ENCODE measurements at regions of chr7 and their contacts with region 1.

Region 1: DNA sequence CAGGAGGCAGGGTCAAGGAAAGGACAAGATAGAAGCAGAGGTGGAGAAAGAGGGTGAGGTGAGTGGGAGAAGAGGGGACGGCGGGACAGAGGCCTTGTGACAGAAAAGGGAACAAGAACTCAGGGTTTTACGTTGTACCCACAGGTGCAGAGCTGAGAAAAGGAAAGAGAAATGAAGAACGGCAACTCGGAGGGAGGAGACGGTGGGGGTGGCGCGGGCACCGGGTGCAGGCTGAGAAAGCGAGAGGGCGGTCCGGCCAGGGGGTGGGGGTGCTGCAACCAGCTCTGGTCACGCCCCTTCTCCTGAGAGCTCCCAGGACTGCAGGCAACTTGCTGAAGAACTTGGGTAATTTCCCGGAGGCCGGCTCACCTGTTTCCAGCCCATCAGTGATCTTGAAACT is 65.3 kb downstream of the CARD11 start:
- DNase-seq: peak; percentile 99
- H3K4me3 Mint-ChIP-seq: peak overlapping the region; percentile 76
- H3K27ac Mint-ChIP-seq: peak overlapping the region; percentile 98
- H3K4me1 Mint-ChIP-seq: peaks cover 70% of the 10 kb centered on the region
- H3K27me3 Mint-ChIP-seq: no peaks in the 10 kb centered on the region

Region 2: GRCh38 chr7:2870471-2870931 is 107.9 kb before region 1 on chr7:
- CTCF ChIA-PET with region 1: no interaction called
- intact Hi-C with region 1: loop called (anchors 1 kb)
- DNase-seq: peak; percentile 94
- H3K4me3 Mint-ChIP-seq: peak overlapping the region; percentile 61
- H3K27ac Mint-ChIP-seq: peak overlapping the region; percentile 72
- H3K4me1 Mint-ChIP-seq: peaks cover 57% of the 10 kb centered on the region
- H3K27me3 Mint-ChIP-seq: no peaks in the 10 kb centered on the region

Region 3: GRCh38 chr7:2934211-2934731 is 44.1 kb before region 1 on chr7:
- CTCF ChIA-PET with region 1: no interaction called
- intact Hi-C with region 1: loop called (anchors 1 kb)
- DNase-seq: peak; percentile 72
- H3K4me3 Mint-ChIP-seq: no peak overlapping the region
- H3K27ac Mint-ChIP-seq: peak overlapping the region; percentile 99
- H3K4me1 Mint-ChIP-seq: peaks cover 19% of the 10 kb centered on the region
- H3K27me3 Mint-ChIP-seq: no peaks in the 10 kb centered on the region

Region 4: GRCh38 chr7:3028071-3028757 is 49.8 kb after region 1 on chr7:
- CTCF ChIA-PET with region 1: no interaction called
- intact Hi-C with region 1: loop called (anchors 1 kb)
- DNase-seq: peak; percentile 88
- H3K4me3 Mint-ChIP-seq: peak overlapping the region; percentile 65
- H3K27ac Mint-ChIP-seq: peak overlapping the region; percentile 92
- H3K4me1 Mint-ChIP-seq: peaks cover 57% of the 10 kb centered on the region
- H3K27me3 Mint-ChIP-seq: no peaks in the 10 kb centered on the region

Region 5: DNA sequence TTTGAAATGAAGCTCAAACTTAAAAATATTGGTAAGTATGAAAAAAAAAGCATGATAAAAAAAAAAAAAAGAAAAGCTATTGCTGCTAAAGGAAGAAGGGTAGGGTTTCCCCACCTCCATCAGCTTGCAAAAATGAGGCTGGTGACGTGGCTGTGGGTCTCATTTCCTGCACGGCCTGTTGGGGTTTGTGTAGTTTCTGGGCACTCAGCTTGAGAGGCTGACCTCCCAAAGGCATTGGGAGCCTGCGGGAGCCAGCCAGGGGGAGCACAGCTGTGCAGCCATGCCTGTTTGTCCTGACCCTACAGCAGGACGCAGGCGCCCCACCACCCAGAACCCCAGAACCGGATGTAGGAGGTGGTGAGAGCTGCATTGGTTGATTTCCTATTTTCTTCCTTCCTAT is 114.1 kb after region 1 on chr7:
- CTCF ChIA-PET with region 1: interaction called, 4 read pairs
- intact Hi-C with region 1: loop called (anchors 1 kb)
- DNase-seq: peak; percentile 94
- H3K4me3 Mint-ChIP-seq: peak overlapping the region; percentile 59
- H3K27ac Mint-ChIP-seq: peak overlapping the region; percentile 96
- H3K4me1 Mint-ChIP-seq: peaks cover 70% of the 10 kb centered on the region
- H3K27me3 Mint-ChIP-seq: no peaks in the 10 kb centered on the region

Region 6: GRCh38 chr7:3232228-3232627 is 253.8 kb after region 1 on chr7:
- CTCF ChIA-PET with region 1: no interaction called
- intact Hi-C with region 1: no loop called
- DNase-seq: no peak
- H3K4me3 Mint-ChIP-seq: no peak overlapping the region
- H3K27ac Mint-ChIP-seq: no peak overlapping the region
- H3K4me1 Mint-ChIP-seq: peaks cover 17% of the 10 kb centered on the region
- H3K27me3 Mint-ChIP-seq: no peaks in the 10 kb centered on the region